Sigmoid colon (tissue), 7 donors: ENCODE measurements at regions of chr6 and their contacts with region 1.

Region 1: GRCh38 chr6:25889877-25890853 is 16.1 kb upstream of the SLC17A3 start:
- DNase-seq: no peak
- H3K4me3 ChIP-seq: no peak overlapping the region
- H3K27ac ChIP-seq: no peak overlapping the region
- H3K4me1 ChIP-seq: no peaks in the 10 kb centered on the region
- H3K27me3 ChIP-seq: no peaks in the 10 kb centered on the region
- CTCF ChIP-seq: peak in 2 of 4 experiments; percentile 14 to 31
- EP300 ChIP-seq: no peak
- POLR2A ChIP-seq: no peak

Region 2: DNA sequence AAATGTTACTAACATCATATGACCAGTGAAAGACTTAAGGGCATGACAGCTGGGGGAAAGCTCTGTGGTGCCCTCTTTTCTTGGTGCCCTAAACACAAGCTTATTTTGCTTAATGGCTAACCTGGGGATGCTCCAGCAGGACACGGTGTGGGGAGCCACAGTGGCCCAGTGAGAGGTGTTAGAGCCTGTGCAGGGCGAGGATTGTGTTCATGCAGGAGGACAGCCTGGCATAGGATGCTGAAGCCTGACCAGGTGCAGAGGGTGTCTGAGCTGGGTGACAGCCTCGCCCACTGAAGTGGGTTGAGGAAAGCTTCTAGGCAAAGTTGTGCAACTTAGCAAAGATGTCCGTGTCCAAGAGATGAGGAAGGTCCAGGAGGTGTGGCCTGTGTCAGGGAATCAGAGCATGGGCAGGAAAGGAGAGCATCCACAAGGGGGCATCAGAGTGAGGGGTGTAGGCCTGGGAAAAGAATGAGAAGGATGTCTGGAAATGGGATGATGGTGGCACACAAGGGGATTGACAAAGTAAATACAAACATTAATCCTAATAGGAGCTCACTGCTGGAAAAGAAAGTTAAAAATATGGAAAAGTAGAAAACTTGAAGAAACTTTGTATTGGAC is 101.8 kb before region 1 on chr6:
- intact Hi-C with region 1: loop called (anchors 10 kb)
- DNase-seq: no peak
- H3K4me3 ChIP-seq: no peak overlapping the region
- H3K27ac ChIP-seq: no peak overlapping the region
- H3K4me1 ChIP-seq: no peaks in the 10 kb centered on the region
- H3K27me3 ChIP-seq: no peaks in the 10 kb centered on the region
- CTCF ChIP-seq: peak in 3 of 4 experiments; percentile 10 to 15 (median 12)
- EP300 ChIP-seq: no peak
- POLR2A ChIP-seq: no peak

Region 3: DNA sequence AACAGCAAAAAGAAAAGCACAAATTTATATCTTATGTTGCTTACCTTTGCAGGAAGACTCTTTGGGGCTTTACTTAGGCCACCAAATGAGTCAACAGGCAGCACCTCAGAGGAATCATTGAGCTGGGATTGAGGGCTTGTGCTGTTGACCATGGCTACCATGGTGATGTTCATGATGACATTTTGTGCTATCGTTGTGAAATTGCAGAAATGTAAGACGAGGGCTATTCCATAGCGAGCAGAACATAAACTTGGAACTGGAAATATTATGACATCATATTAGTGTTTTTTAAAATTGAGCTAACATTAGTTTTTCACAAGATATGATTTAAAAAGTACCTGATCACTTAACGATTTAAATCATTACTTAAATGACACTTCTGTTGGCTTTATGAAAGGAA is 28.0 kb before region 1 on chr6:
- intact Hi-C with region 1: no loop called
- DNase-seq: no peak
- H3K4me3 ChIP-seq: no peak overlapping the region
- H3K27ac ChIP-seq: no peak overlapping the region
- H3K4me1 ChIP-seq: no peaks in the 10 kb centered on the region
- H3K27me3 ChIP-seq: no peaks in the 10 kb centered on the region
- CTCF ChIP-seq: no peak
- EP300 ChIP-seq: no peak
- POLR2A ChIP-seq: no peak

Region 4: GRCh38 chr6:26065952-26066380 is 175.8 kb after region 1 on chr6:
- intact Hi-C with region 1: no loop called
- DNase-seq: peak; percentile 85
- H3K4me3 ChIP-seq: no peak overlapping the region
- H3K27ac ChIP-seq: no peak overlapping the region
- H3K4me1 ChIP-seq: peaks cover 0 to 7% (median 5%) of the 10 kb centered on the region in 4 donors
- H3K27me3 ChIP-seq: no peaks in the 10 kb centered on the region
- CTCF ChIP-seq: peak; percentile 67 to 84 (median 74)
- EP300 ChIP-seq: no peak
- POLR2A ChIP-seq: no peak